A673 (cell line): ENCODE measurements at regions of chr6 and their contacts with region 1.

Region 1: GRCh38 chr6:99270826-99271225 is 78.6 kb downstream of the FAXC start:
- DNase-seq: no peak
- H3K4me3 ChIP-seq: no peak overlapping the region
- H3K27ac ChIP-seq: no peak overlapping the region
- H3K4me1 ChIP-seq: no peaks in the 10 kb centered on the region
- H3K27me3 ChIP-seq: no peaks in the 10 kb centered on the region
- CTCF ChIP-seq: no peak

Region 2: GRCh38 chr6:99014061-99014460 is 256.8 kb before region 1 on chr6:
- CTCF ChIA-PET with region 1: interaction called, 10 read pairs
- POLR2A ChIA-PET with region 1: no interaction called
- intact Hi-C with region 1: no loop called
- DNase-seq: no peak
- H3K4me3 ChIP-seq: no peak overlapping the region
- H3K27ac ChIP-seq: no peak overlapping the region
- H3K4me1 ChIP-seq: no peaks in the 10 kb centered on the region
- H3K27me3 ChIP-seq: no peaks in the 10 kb centered on the region
- CTCF ChIP-seq: no peak

Region 3: DNA sequence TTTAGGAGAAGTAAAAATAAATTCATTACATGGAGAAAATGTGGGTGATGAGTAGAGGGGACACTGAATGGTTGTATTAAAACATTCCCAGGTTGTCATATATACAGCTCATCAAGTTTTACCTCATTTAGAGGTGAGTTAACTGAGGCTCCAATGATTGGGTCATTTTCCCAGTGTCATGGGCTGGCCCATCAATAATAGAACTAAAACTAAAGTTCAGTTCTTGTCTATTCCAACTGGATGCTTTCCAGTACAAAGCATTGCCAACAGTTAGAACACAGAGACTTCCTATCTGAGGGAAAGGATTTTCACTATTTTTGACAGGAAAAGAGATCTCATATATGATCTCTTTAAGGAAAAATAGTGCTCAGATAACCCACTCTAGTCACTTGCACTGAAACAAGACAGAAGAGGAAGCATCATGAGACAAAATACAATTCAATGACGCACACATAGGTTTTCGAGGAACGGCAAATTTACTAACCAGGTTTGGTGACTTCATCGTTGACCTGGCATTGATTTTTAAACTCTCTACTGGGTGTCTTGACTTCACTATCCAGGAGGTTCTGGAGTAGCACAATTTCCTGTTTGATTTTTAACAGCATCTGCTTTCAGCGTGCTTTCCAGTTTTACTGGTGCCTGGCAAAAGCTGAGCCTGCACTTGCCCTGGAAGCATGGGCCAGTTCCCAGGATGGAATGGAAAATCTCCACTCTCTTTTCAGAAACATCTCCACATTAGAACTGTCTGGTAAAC is 127.5 kb before region 1 on chr6:
- CTCF ChIA-PET with region 1: no interaction called
- POLR2A ChIA-PET with region 1: no interaction called
- intact Hi-C with region 1: no loop called
- DNase-seq: no peak
- H3K4me3 ChIP-seq: no peak overlapping the region
- H3K27ac ChIP-seq: no peak overlapping the region
- H3K4me1 ChIP-seq: peaks cover 11% of the 10 kb centered on the region
- H3K27me3 ChIP-seq: no peaks in the 10 kb centered on the region
- CTCF ChIP-seq: no peak